RWPE1 (cell line): ENCODE measurements at regions of chr15 and their contacts with region 1.

Region 1: GRCh38 chr15:40906091-40906990 is 12.1 kb downstream of the VPS18 start:
- DNase-seq: peak; percentile 85
- H3K27ac ChIP-seq: peak overlapping the region; percentile 91
- CTCF ChIP-seq: peak; percentile 92

Region 2: DNA sequence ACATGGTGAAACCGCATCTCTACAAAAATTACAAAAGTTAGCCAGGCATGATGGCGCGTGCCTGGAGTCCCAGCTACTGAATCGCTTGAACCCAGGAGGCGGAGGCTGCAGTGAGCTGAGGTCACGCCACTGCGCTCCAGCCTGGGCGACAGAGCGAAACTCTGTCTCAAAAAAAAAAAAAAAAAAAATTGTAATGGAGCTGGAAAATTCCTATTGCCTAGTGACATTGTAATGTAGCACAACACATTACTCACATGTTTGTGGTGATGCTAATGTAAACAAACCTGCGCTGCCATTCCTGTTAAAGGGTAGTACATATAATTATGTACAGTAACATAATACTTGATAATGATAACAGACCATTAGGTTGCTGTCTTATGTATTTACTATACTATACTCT is 273.2 kb before region 1 on chr15:
- CTCF ChIA-PET with region 1: no interaction called
- POLR2A ChIA-PET with region 1: no interaction called
- DNase-seq: no peak
- H3K27ac ChIP-seq: no peak overlapping the region
- CTCF ChIP-seq: no peak

Region 3: DNA sequence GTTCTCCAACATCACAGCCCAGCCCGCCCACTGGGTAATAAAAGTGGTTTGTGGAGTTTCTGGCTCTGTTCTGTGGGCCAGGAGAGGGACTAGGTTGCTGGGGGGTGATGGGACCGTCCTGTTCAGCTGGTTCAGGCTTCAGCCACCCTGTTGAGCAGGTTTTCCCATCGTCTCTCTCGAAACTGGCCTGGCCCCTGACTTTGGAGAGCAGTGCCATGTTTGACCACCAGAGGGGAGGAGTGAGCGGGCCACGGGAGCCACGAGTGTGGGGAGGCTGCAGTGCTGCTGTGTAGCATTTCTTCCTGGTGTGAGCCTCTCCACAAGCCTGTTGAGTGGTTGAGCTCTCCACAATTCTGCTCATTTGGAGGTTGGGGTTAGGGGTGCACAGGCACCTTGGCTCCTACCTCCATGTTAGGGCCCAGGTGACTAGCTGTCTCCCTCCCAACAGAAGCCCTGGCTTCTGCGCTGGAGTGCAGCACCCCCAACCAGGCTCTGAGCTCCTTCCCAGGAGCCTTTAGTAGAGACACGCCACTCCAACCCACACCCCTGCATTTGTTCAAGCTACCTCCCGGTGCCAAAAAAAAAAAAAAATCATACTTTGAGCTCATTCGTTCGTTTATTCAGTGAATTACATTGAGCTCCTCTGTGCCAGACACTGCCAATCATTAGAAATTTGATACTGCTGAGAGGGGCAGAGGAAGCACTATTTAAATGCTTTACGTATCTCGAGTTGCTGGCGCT is 48.6 kb before region 1 on chr15:
- CTCF ChIA-PET with region 1: interaction called, 19 read pairs
- POLR2A ChIA-PET with region 1: no interaction called
- DNase-seq: peak; percentile 94
- H3K27ac ChIP-seq: peak overlapping the region; percentile 12
- CTCF ChIP-seq: peak; percentile 99

Region 4: DNA sequence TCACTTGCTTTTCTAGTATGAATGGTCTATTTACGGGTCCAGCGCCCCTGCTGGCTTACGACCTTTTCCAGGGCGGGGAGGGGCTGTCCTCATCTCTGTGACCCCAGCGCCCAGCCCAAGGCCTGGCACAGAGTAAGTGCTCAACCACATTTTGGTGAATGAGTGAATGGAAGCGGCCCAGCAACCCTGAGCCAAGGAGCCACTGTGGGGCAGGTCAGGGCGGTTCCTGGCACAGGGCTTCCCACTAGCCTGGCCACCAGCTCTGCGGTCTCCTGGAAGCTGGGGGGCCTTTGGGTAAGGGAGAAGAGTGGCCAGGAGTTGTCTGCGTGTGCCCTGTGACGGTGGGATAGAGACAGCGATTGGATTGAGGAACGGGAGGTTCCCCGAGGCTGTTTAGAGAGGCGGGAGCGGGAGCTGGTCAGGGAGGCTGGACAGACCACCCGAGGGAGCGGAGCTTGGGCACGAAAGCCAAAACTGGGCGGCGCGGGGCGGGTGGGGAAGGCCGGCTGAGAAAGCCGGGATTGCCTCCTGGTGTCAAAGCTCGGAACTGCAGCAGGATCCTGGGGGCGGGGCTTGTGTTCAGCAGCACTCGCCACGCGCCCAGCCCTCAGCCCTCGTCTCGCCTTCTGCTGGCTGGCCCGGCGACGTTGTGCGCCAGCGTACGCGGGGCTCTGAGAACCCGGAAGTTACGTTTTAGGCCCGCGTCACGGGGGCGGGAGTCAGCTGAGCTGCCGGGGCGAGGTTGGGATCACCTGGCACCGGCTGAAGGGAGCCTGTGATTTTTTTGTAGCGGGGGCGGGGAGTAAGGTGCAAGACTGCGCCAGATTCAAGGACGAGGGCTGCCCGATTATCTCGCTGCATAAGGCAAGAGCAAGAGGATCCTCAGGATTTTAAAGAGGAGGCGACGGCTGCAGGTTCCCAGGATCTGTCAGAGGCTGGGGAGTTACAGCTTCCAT is 12.3 kb before region 1 on chr15 and contains the start of gene VPS18:
- CTCF ChIA-PET with region 1: interaction called, 14 read pairs
- POLR2A ChIA-PET with region 1: no interaction called
- DNase-seq: peak; percentile 92
- H3K27ac ChIP-seq: peak within 1 kb of the TSS; percentile 89
- CTCF ChIP-seq: peak; percentile 98

Region 5: GRCh38 chr15:40928821-40929659 is 22.7 kb after region 1 on chr15 and contains the start of gene DLL4:
- CTCF ChIA-PET with region 1: interaction called, 26 read pairs
- POLR2A ChIA-PET with region 1: no interaction called
- DNase-seq: peak; percentile 70
- H3K27ac ChIP-seq: no peak within 1 kb of the TSS
- CTCF ChIP-seq: no peak

Region 6: GRCh38 chr15:40941528-40942336 is 35.4 kb after region 1 on chr15:
- CTCF ChIA-PET with region 1: interaction called, 19 read pairs
- POLR2A ChIA-PET with region 1: interaction called, 5 read pairs
- DNase-seq: peak; percentile 80
- H3K27ac ChIP-seq: peak overlapping the region; percentile 39
- CTCF ChIP-seq: peak; percentile 99

Region 7: DNA sequence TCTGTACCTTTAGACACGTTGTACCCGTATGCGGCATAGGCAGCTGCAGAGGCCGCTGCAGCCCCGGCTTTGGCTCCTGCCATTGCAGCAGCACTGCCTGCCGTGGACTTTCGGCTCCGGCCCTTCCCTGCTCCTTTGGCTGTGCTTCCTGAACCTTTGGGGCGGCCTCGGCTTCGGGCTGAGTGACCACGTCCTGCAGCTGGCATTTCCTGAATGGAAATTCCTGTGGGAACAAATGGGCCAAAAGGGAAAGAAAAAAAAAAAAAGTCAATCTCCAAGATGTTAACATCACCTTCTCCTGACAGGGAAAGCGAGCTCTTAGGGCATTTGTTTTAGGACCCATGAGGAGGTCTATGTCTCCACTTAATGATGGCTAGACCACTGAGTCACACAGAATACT is 76.5 kb after region 1 on chr15:
- CTCF ChIA-PET with region 1: no interaction called
- POLR2A ChIA-PET with region 1: no interaction called
- DNase-seq: no peak
- H3K27ac ChIP-seq: no peak overlapping the region
- CTCF ChIP-seq: no peak

Region 8: DNA sequence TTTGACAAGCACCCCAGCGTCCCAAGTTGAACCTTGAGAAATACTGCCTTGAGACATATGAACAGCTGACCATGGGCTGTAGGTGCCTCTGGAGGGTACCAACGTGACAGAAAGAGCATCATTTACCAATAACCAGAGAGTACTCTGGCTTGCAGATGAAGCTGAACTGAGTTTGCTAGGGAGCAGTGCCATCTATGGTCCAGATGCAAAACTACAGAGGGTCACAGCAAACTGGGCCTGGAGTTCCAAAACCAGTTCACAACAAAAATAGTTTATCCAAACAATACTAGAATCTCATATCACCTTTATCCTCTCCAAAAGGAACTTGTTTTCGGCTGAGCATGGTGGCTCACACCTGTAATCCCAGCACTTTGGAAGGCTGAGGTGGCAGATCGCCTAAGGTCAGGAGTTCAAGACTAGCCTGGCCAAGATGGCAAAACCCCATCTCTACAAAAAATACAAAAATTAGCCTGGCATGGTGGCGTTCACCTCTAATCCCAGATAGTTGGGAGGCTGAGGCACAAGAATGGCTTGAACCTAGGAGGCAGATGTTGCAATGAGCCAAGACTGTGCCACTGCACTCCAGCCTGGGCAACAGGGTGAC is 116.2 kb after region 1 on chr15:
- CTCF ChIA-PET with region 1: interaction called, 24 read pairs
- POLR2A ChIA-PET with region 1: no interaction called
- DNase-seq: peak; percentile 50
- H3K27ac ChIP-seq: no peak overlapping the region
- CTCF ChIP-seq: peak; percentile 75

Region 9: GRCh38 chr15:41183581-41183980 is 277.2 kb after region 1 on chr15:
- CTCF ChIA-PET with region 1: interaction called, 11 read pairs
- POLR2A ChIA-PET with region 1: no interaction called
- DNase-seq: no peak
- H3K27ac ChIP-seq: no peak overlapping the region
- CTCF ChIP-seq: no peak